ENCODE measurements at regions of chr3 and their contacts with region 1.

Region 1: GRCh38 chr3:190424478-190425439 is 24.9 kb downstream of the TMEM207 start:
- DNase-seq: peak; percentile 59
- H3K4me3 Mint-ChIP-seq: no peak overlapping the region
- H3K27ac Mint-ChIP-seq: no peak overlapping the region
- H3K4me1 Mint-ChIP-seq: peaks cover 2% of the 10 kb centered on the region
- H3K27me3 Mint-ChIP-seq: no peaks in the 10 kb centered on the region

Region 2: DNA sequence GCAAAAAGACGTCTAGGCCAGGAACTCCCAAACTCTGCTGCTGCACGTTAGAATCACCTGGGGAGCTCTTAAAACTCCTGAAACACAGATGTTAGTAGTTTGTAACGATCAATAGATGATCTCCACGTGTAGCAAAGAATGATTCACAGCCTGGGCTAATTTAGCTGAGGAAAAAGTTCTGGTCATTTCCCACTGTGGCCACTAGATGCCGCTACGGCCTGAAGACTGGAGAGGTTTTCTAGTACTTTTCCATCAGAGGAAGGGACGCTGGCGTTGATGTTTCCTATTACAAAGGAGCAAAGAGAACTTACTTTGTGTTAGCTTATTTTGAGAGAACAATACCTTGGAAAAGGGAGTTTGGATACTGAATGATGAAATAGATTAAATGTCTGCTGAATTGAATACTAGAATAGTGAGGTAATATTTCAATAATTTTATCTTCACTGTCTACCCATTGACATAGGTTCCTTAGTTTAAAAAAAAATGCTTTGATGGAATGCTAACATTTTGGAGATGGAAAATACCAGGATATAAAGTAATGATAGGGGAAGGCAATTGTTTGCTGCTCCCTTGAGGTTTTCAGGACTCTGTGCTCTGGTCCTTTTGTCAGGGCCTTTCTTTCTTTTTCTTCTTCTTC is 463.1 kb before region 1 on chr3:
- CTCF ChIA-PET with region 1: interaction called, 18 read pairs
- intact Hi-C with region 1: loop called (anchors 1 kb)
- DNase-seq: peak; percentile 87
- H3K4me3 Mint-ChIP-seq: no peak overlapping the region
- H3K27ac Mint-ChIP-seq: no peak overlapping the region
- H3K4me1 Mint-ChIP-seq: peaks cover 5% of the 10 kb centered on the region
- H3K27me3 Mint-ChIP-seq: peaks cover 6% of the 10 kb centered on the region

Region 3: DNA sequence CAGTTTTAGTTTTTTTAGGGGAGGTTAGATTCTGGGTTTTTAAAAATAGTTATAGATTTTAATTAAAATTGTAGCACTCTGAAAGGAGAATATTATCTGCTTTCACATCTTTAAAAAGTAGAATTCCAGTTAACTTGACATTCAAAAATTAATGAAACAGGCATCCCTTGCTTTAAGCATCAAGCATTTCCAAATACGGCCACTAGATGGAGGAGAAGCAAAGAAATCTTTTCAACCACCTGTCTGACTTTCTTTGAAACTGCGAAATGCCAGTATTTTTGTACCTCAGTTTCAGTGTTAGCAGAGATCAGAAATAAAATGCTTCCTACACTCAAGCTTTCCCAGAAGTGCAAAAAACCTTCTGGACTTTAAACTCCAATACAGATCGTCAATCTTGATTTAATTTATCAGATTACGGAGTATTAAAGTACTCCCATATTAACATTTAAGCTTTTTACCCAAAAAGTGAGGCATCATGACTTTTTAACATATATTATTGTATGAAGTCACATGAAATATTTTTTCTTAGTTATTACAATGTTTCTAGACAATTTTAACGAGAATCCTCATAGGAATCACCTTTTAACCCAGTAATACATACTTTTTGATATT is 457.4 kb before region 1 on chr3:
- CTCF ChIA-PET with region 1: interaction called, 18 read pairs
- intact Hi-C with region 1: loop called (anchors 1 kb)
- DNase-seq: peak; percentile 28
- H3K4me3 Mint-ChIP-seq: no peak overlapping the region
- H3K27ac Mint-ChIP-seq: no peak overlapping the region
- H3K4me1 Mint-ChIP-seq: no peaks in the 10 kb centered on the region
- H3K27me3 Mint-ChIP-seq: peaks cover 3% of the 10 kb centered on the region

Region 4: GRCh38 chr3:190224863-190225692 is 199.7 kb before region 1 on chr3:
- CTCF ChIA-PET with region 1: interaction called, 16 read pairs
- intact Hi-C with region 1: loop called (anchors 1 kb)
- DNase-seq: no peak
- H3K4me3 Mint-ChIP-seq: no peak overlapping the region
- H3K27ac Mint-ChIP-seq: no peak overlapping the region
- H3K4me1 Mint-ChIP-seq: no peaks in the 10 kb centered on the region
- H3K27me3 Mint-ChIP-seq: peaks cover 2% of the 10 kb centered on the region

Region 5: DNA sequence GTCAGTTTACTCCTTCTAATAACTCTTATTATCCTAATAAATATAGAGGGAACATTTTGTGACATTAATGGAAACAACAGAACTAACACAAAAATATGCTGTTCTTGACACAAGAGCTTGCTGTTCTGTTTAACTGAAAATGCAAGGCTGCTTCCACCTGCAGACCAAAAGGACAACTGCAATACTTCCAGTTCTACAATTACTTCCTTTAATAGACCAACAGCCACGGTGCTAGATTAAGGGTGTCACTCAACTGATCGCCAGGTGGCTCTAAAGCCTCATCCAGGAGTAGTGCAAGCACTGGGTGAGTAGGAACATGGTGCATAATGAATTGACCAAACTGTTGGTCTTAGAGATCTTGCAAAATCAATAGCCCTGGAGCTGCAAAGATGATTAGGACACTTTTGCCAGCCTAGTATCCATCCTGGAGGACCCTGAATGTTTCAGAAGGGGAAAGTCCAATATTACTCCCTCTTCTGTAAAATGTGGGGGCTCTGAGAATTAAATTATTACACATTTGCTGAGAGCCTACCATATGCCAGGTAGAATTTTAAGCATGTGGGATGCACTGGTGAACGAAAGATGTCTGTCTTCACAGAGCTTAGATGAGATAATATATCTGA is 40.4 kb before region 1 on chr3:
- CTCF ChIA-PET with region 1: no interaction called
- intact Hi-C with region 1: loop called (anchors 2 kb)
- DNase-seq: peak; percentile 48
- H3K4me3 Mint-ChIP-seq: no peak overlapping the region
- H3K27ac Mint-ChIP-seq: no peak overlapping the region
- H3K4me1 Mint-ChIP-seq: peaks cover 8% of the 10 kb centered on the region
- H3K27me3 Mint-ChIP-seq: peaks cover 5% of the 10 kb centered on the region

Measured in activated naive CD4-positive, alpha-beta T cell treated with anti-CD3 and anti-CD28 coated beads for 36 hours (primary cell).